ENCODE measurements at regions of chr15 and their contacts with region 1.

Region 1: GRCh38 chr15:43524254-43524845 is 6.9 kb downstream of the MAP1A start:
- DNase-seq: peak in 1 of 10 donors; percentile 5
- H3K4me3 ChIP-seq: peak overlapping the region in 1 of 59 donors; percentile 2
- H3K27ac ChIP-seq: peak overlapping the region in 18 of 59 donors; percentile 5 to 99 (median 30)
- H3K27me3 ChIP-seq: no peaks in the 10 kb centered on the region
- CTCF ChIP-seq: no peak

Region 2: GRCh38 chr15:43370975-43371974 is 153.1 kb before region 1 on chr15 and contains the starts of genes TUBGCP4 and ZSCAN29:
- intact Hi-C with region 1: loop called in 1 of 2 experiments (anchors 10 kb)
- DNase-seq: peak; percentile 64 to 91 (median 70)
- H3K4me3 ChIP-seq: peak within 1 kb of the TSS; percentile 54 to 99 (median 92)
- H3K27ac ChIP-seq: peak within 1 kb of the TSS in 52 of 59 donors; percentile 0 to 93 (median 71)
- H3K27me3 ChIP-seq: no peaks in the 10 kb centered on the region
- CTCF ChIP-seq: peak in 24 of 56 donors; percentile 5 to 48 (median 16)
- total RNA-seq, gene TUBGCP4: 19.0 to 42.6 (median 29.7) TPM
- total RNA-seq, gene ZSCAN29: 16.1 to 41.9 (median 26.0) TPM

Region 3: DNA sequence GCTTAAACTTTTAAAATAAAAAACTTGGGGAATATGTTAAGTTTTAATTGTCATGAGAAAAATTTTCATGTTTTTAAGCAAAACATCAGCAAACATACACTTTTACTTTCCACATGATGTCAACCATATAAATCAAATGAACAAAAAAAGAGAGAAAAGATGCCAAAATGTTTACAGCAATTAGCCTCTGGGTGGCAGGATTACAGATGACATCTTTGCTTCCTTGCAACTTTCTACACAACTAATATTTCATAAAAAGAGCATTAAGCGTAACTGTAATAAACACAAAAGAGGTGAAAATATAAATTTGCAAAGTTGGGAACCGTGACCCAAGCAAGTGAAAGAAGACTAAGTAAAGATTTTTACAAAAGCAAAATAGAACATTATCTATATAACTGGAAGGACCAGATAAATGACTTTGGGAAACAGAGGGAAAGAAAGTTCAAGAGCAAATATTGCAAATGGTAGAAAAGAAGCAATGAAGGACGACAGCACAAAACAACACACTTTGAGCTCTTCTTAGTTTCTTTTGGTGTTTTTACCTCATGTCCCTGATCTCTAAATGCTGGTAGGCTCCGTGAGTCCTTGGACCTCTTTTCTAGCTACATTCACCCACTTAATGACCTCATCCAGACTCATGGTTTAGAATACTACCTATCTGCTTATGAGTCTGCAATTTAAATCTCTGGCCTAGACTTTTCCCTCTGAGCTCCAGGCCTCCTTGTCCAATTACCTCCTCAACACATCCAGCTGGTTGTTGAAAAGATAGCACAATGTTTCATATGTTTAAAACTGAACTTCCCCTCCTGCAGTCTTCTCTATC is 40.8 kb before region 1 on chr15:
- intact Hi-C with region 1: loop called in 1 of 2 experiments (anchors 5 kb)
- DNase-seq: no peak
- H3K4me3 ChIP-seq: peak overlapping the region in 1 of 59 donors; percentile 4
- H3K27ac ChIP-seq: peak overlapping the region in 17 of 59 donors; percentile 6 to 56 (median 30)
- H3K27me3 ChIP-seq: no peaks in the 10 kb centered on the region
- CTCF ChIP-seq: peak in 55 of 56 donors; percentile 17 to 78 (median 56)

Measured in dorsolateral prefrontal cortex (tissue), 120 donors.